K562 (cell line): ENCODE measurements at regions of chr3 and their contacts with region 1.

Region 1: DNA sequence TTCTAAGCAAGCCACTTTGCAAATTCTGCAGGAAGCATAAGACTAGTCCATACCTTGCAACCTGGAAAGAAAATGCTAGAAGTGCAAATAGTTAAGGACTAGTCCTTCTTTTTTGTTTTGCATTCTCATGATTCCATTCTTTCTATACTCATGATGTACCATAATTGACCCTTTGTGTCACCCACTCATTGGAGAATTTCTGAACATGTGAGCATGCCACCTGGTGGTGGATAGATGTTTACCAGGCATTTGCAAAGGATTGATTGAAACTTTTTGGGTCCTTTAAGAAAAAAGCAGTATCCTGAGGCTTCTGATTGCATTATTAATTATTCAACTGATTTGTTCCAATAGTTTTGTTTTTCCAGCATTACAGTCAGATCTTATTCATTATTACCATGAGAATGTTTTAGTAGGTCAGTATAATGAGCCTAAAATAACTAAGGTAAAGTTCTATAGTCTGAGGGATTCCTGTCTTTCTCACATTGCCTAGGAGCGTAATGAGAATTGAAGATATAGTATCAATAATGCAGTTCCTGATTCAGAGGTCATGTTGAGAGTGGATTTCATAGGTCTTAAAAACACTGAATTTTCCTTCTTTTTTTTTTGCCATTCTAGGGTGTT is 20.2 kb upstream of the DIPK2A start:
- DNase-seq: peak; percentile 22 to 38 (median 32)
- ATAC-seq: peak; percentile 59; the same call in 2 of the 3 replicates
- H3K4me3 ChIP-seq: no peak overlapping the region
- H3K27ac ChIP-seq: no peak overlapping the region
- H3K4me1 ChIP-seq: no peaks in the 10 kb centered on the region
- H3K27me3 ChIP-seq: no peaks in the 10 kb centered on the region
- CTCF ChIP-seq: peak in 2 of 3 experiments; percentile 53 to 59; a peak in 4 of 6 replicates
- EP300 ChIP-seq: no peak
- POLR2A ChIP-seq: no peak
- RAD21 ChIP-seq: peak; percentile 12 to 45; a peak in 2 of 4 replicates

Region 2: DNA sequence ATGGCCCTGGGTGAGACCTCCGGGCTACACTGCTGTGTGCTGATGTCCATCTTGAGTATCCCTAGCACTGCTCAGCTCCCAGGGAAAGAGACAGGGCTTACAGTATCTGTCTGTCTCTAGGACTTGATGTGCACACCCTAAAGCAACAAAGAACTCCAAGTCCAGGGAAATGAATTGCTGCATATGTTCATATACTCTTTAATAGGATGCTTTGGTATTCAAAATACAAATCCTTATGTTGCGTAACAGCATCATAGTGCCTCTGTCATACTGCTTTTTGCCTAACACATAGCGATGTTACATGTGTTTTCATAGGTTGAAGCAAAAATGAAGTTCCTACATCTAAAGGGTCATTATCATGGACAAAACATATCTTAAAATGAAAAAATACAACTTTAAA is 403.1 kb before region 1 on chr3:
- CTCF ChIA-PET with region 1: no interaction called
- POLR2A ChIA-PET with region 1: no interaction called
- in situ Hi-C with region 1: no loop called
- intact Hi-C with region 1: no loop called
- DNase-seq: no peak
- ATAC-seq: no peak
- H3K4me3 ChIP-seq: no peak overlapping the region
- H3K27ac ChIP-seq: no peak overlapping the region
- H3K4me1 ChIP-seq: no peaks in the 10 kb centered on the region
- H3K27me3 ChIP-seq: no peaks in the 10 kb centered on the region
- CTCF ChIP-seq: no peak
- EP300 ChIP-seq: no peak
- POLR2A ChIP-seq: no peak
- RAD21 ChIP-seq: no peak

Region 3: DNA sequence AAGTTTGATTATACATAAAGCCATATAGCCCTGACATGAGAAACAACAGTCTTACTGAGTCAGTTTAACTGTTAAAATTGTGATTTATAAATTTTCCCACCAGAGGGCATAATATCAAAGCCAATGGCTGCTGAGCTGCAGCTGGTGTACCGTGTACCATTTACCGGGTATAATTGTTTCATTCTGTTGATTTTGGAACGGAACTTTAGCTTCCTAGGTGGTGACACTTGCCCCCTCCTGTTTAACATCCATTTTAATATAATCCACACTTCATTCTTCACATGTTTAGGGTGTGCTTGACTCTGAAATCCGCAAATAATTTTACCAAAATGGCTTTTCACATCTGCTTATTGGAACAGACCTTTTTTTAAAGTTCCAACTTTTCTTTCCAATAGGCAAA is 176.0 kb before region 1 on chr3:
- CTCF ChIA-PET with region 1: no interaction called
- POLR2A ChIA-PET with region 1: no interaction called
- in situ Hi-C with region 1: no loop called
- intact Hi-C with region 1: loop called (anchors 5 kb)
- DNase-seq: peak; percentile 31 to 59 (median 46)
- ATAC-seq: peak; percentile 89
- H3K4me3 ChIP-seq: no peak overlapping the region
- H3K27ac ChIP-seq: no peak overlapping the region
- H3K4me1 ChIP-seq: no peaks in the 10 kb centered on the region
- H3K27me3 ChIP-seq: no peaks in the 10 kb centered on the region
- CTCF ChIP-seq: peak; percentile 44 to 58 (median 45); a peak in 5 of 6 replicates
- EP300 ChIP-seq: no peak
- POLR2A ChIP-seq: no peak
- RAD21 ChIP-seq: peak; percentile 60 to 73